ENCODE measurements at regions of chr19 and their contacts with region 1.

Region 1: DNA sequence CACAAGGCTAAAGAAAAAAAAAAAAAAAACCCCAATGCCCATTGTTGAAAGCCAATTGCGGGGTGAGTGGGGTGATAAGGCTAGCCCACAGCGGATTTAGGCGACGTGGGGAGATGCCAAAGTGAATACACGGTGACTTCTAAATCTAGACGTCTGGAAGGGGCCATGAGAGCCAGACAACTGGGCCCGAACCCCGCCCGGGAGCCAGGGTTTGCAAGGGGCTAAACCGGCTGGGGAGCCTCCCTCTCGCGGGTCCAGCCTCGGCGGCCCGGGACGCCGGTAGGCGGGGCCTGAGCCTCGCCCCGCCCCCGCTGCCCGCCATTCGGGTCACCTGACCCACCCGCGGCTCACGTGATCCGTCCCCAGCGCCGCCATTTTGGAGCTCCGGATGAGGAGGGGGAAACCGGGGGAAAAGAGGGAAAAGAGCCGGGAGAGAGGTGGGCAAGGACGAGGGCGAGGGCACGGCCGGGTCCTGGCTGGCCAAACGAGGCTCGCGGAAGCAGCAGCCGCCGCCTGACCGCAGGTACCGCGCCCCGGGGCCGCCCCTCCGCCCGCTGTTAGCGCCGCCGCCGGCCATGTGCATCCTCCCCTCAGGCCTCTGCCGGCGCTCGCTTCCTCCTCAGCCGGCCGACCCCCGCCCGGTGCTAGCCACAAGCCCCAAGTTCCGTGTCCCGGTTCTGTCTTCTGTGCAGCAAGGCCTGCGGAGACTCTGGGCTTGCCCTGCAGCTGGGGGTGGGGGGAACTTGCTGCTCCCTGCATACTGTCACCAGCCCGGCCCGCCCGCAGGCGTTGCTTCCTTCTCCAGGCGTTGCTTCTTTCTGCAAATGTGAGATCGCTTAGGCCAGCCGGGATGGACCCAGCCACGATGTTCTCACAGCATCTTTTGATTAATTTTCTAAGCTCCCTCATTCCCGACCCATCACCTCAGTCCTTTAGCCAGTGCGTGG is at the start of gene ZNF507:
- DNase-seq: peak; percentile 74
- ATAC-seq: peak; percentile 66
- H3K4me3 ChIP-seq: peak within 1 kb of the TSS; percentile 95
- H3K27ac ChIP-seq: peak within 1 kb of the TSS; percentile 72
- H3K4me1 ChIP-seq: peaks cover 42% of the 10 kb centered on the region
- H3K27me3 ChIP-seq: no peaks in the 10 kb centered on the region
- CTCF ChIP-seq: no peak
- total RNA-seq, gene ZNF507: 4.9 and 7.1 TPM in 2 replicates

Region 2: GRCh38 chr19:32238076-32238475 is 107.5 kb before region 1 on chr19:
- CTCF ChIA-PET with region 1: no interaction called
- POLR2A ChIA-PET with region 1: no interaction called
- intact Hi-C with region 1: no loop called
- DNase-seq: no peak
- ATAC-seq: no peak
- H3K4me3 ChIP-seq: no peak overlapping the region
- H3K27ac ChIP-seq: no peak overlapping the region
- H3K4me1 ChIP-seq: no peaks in the 10 kb centered on the region
- H3K27me3 ChIP-seq: 0 out of 2 replicates have a peak, but pooled peaks cover 6% of the 10 kb centered on the region
- CTCF ChIP-seq: no peak

Region 3: DNA sequence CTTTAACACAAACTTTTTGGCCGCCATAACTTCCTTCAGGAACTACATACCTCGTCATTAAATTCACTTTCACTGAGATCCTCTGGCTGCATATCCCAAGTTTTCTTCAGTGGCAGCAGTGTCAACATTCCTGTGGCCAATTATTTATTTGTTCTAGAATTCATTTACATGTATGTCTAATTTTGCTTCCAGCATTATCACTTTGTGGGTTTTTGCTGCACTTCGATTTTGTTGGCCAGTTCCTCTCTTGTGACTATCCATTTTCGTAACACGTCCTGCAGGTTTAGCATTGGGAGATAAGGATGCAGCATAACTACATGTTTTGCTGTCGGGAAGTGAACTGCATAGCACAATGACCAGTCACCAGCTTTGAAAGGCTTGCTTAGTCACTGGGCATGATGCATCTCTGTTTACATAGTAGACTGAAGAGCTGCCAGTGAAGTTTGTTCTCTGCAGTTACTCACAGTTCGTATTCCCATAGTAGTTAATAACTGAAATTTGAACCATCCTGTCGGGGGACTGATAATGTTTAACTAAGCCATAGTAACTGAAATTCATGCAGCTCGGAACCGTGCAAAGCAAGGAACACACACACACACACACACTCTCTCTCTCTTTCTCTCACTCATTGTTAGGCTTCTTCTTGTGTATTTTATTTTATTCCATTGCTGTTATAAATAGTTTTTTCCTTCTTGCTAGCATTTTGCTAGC is 28.2 kb after region 1 on chr19:
- CTCF ChIA-PET with region 1: no interaction called
- POLR2A ChIA-PET with region 1: no interaction called
- intact Hi-C with region 1: loop called (anchors 2 kb)
- DNase-seq: peak; percentile 96
- ATAC-seq: peak; percentile 98
- H3K4me3 ChIP-seq: peak overlapping the region; percentile 44; the same call in 1 of the 2 replicates
- H3K27ac ChIP-seq: peak overlapping the region; percentile 82
- H3K4me1 ChIP-seq: peaks cover 32% of the 10 kb centered on the region
- H3K27me3 ChIP-seq: no peaks in the 10 kb centered on the region
- CTCF ChIP-seq: no peak

Region 4: GRCh38 chr19:32405431-32406161 is 60.1 kb after region 1 on chr19 and contains the start of gene DPY19L3:
- CTCF ChIA-PET with region 1: no interaction called
- POLR2A ChIA-PET with region 1: no interaction called
- intact Hi-C with region 1: loop called (anchors 5 kb)
- DNase-seq: peak; percentile 83
- ATAC-seq: peak; percentile 92
- H3K4me3 ChIP-seq: peak within 1 kb of the TSS; percentile 87
- H3K27ac ChIP-seq: peak within 1 kb of the TSS; percentile 70
- H3K4me1 ChIP-seq: peaks cover 18% of the 10 kb centered on the region
- H3K27me3 ChIP-seq: no peaks in the 10 kb centered on the region
- CTCF ChIP-seq: no peak
- total RNA-seq, gene DPY19L3: 4.0 and 4.4 TPM in 2 replicates

Region 5: GRCh38 chr19:32580901-32581703 is 235.6 kb after region 1 on chr19 and contains the start of gene PDCD5:
- CTCF ChIA-PET with region 1: no interaction called
- POLR2A ChIA-PET with region 1: interaction called, 16 read pairs
- intact Hi-C with region 1: no loop called
- DNase-seq: peak; percentile 88
- ATAC-seq: peak; percentile 94
- H3K4me3 ChIP-seq: peak within 1 kb of the TSS; percentile 95
- H3K27ac ChIP-seq: no peak within 1 kb of the TSS
- H3K4me1 ChIP-seq: peaks cover 7% of the 10 kb centered on the region; the same call in 1 of the 2 replicates
- H3K27me3 ChIP-seq: no peaks in the 10 kb centered on the region
- CTCF ChIP-seq: no peak
- total RNA-seq, gene PDCD5: 165 and 203 TPM in 2 replicates